ENCODE measurements at regions of chr15 and their contacts with region 1.

Region 1: DNA sequence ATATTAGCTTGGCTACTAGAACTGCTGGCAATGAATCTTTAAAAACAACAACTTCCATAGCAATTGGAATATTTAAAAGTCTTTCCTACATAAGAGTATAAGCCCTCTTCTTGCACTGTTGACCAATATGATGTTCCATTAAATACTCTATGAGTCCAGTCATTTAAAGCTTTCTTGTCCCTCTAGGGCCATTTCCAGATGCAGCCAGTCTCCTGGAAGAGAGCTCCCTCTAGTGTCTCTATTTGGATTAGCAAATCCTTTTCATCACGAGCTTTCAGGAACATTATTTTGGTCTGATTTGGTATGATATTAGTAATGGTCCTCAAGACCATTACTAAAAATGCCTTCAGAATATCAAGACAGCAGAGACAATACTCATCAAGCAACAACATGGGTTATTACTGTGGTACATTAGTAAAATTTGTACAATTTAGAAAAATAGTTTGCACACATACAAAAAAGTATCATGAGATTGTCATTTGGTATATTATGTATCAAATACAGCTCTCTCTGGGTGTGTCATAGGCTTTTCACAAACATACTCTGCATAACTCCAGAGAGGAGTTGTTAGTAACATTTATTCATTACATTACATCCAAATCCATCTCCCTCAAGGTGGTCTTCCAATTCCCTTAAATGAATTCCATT is 101.3 kb downstream of the DPH6 start:
- DNase-seq: no peak
- H3K4me3 Mint-ChIP-seq: no peak overlapping the region
- H3K27ac Mint-ChIP-seq: no peak overlapping the region
- H3K4me1 Mint-ChIP-seq: no peaks in the 10 kb centered on the region
- H3K27me3 Mint-ChIP-seq: no peaks in the 10 kb centered on the region
- CTCF ChIP-seq: no peak

Region 2: DNA sequence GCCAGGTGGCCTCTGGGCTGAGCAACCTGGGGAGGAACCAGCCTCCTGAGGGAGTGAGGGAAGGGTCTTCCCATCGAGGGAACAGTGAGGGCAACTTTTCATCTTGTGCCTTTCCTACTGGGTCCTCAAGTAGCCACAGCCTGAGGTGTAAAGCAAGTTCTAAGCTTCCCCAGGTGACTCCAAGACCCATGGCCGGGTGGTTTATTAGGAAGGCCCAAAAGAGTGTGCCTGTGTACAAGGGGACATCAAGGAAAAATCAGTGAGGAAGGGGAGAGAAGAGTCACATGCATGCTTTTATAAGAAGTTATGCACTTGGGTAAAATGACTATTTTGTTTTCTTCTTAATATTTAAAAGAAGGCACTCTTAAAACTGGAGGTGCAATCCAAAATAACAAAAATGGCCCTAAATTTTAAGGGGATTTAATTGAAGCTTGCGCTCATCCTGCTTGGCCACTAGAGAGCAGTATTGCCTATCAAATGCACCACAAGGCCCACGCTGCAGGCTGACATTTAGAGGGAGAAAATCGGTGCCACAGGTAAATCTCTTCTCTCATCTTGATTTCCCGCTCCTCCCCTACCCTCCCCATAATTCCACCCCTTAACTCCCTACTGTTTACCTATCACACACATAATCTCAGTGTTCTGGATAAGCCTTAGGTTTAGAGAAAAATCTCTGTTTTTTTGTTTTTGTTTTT is 366.3 kb before region 1 on chr15:
- CTCF ChIA-PET with region 1: no interaction called
- intact Hi-C with region 1: loop called (anchors 10 kb)
- DNase-seq: peak; percentile 6
- H3K4me3 Mint-ChIP-seq: no peak overlapping the region
- H3K27ac Mint-ChIP-seq: no peak overlapping the region
- H3K4me1 Mint-ChIP-seq: peaks cover 5% of the 10 kb centered on the region
- H3K27me3 Mint-ChIP-seq: no peaks in the 10 kb centered on the region
- CTCF ChIP-seq: peak; percentile 24

Region 3: GRCh38 chr15:35289024-35289617 is 155.6 kb before region 1 on chr15:
- CTCF ChIA-PET with region 1: interaction called, 28 read pairs
- intact Hi-C with region 1: loop called (anchors 1 kb)
- DNase-seq: peak; percentile 1
- H3K4me3 Mint-ChIP-seq: no peak overlapping the region
- H3K27ac Mint-ChIP-seq: no peak overlapping the region
- H3K4me1 Mint-ChIP-seq: peaks cover 7% of the 10 kb centered on the region
- H3K27me3 Mint-ChIP-seq: no peaks in the 10 kb centered on the region
- CTCF ChIP-seq: no peak